ENCODE measurements at regions of chrX and their contacts with region 1.

Region 1: DNA sequence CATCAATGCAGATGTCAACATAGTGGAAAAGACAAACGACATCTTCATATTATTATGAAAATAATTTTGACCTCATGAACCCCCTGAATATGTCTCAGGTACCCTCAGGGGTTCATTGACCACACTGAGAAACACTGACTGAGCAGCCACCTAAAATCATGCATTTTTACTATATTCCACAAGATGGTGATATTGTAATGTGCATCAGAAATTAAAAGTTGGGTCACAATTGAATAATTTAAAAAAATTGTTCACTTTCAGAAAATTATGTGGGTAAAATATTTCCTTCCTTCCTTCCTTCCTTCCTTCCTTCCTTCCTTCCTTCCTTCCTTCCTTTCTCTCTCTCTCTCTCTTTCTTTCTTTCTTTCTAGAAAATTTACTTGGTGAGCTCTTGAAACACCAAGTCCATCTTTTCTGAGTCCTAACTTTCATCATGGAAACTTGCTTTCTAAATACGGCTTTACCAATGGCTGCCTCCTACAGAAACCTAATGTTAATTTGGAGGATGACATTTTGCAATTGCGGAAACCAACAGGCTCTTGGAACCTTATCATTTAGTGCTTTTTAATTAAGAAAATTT is 103.6 kb downstream of the RTL3 start:
- DNase-seq: no peak
- ATAC-seq: no peak

Region 2: GRCh38 chrX:78619834-78620233 is 64.3 kb after region 1 on chrX:
- intact Hi-C with region 1: no loop called
- DNase-seq: peak; percentile 24
- ATAC-seq: peak in 1 of 2 donors; percentile 43

Region 3: DNA sequence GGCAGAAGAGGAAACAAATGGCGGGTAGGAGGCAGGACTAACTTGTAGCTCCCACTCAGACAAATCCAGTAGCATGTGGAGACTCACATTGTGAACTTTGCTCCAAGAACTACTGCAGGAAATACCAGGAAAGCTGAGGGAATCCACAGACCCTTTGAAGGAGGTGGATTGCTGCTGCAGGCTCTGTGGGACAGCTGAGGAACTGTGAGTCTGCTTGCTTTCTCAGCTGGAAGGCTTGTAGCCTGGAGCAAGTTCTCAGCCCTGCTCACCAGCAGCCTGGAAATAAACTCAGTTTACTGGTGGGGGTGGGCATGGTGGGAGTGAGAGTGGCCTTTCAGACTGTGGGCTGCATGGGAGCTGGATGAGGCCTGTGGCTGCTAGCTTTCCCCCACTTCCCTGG is 87.6 kb after region 1 on chrX:
- intact Hi-C with region 1: no loop called
- DNase-seq: no peak
- ATAC-seq: no peak

Region 4: DNA sequence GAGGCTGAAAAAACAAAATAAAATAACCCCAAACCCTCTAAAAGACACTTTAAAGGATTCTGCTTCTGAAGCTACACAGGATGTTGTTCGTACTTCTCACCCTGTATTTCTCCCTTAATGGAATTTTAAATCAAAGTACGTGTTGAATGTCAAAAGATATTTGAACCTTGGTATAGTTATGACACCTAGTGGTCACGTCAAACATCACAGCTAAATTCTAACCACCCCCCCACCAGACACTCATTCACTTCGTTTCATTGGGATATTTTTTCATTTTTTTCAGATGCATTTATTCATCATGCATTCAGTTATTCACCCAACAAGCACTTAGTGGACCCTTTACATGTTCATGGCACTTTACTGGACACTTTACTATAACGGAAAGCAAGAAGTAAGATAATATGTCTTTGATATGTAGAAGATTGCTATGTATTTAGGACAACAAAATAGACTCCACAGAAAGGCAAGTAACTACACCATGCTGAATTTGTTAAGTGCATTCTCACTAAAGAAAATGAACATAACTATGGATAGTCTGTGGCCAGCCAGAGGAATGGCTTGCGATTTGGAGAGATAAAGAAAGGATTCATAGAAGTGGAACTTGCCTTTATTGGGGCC is 526.5 kb after region 1 on chrX:
- intact Hi-C with region 1: loop called in 1 of 2 experiments (anchors 5 kb)
- DNase-seq: no peak
- ATAC-seq: peak in 1 of 2 donors; percentile 23

Region 5: DNA sequence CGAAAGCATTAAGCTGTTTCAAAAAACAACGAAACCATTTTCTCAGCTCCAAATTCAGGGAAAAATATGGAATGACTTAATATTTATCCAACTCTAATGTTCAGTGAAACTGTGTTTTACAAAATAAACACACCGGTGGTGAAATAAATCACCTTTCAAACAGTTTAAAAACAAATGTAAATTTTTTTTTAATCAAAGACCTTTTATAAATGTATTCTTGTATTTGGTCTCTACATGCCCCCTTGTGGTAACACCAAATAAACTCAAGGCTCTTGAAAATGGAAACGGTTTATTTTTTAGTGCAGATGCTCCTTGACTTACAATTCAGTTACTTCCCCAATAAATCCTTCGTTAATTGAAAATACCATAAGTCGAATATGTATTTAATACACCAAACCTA is 857.5 kb after region 1 on chrX:
- intact Hi-C with region 1: loop called in 1 of 2 experiments (anchors 10 kb)
- DNase-seq: no peak
- ATAC-seq: no peak